ENCODE measurements at regions of chr7 and their contacts with region 1.

Region 1: GRCh38 chr7:26365077-26365900 is 73.6 kb downstream of the SNX10 start:
- DNase-seq: no peak
- ATAC-seq: peak; percentile 74

Region 2: GRCh38 chr7:25894902-25895791 is 470.1 kb before region 1 on chr7:
- intact Hi-C with region 1: loop called (anchors 2 kb)
- DNase-seq: peak; percentile 78
- ATAC-seq: peak; percentile 89

Region 3: DNA sequence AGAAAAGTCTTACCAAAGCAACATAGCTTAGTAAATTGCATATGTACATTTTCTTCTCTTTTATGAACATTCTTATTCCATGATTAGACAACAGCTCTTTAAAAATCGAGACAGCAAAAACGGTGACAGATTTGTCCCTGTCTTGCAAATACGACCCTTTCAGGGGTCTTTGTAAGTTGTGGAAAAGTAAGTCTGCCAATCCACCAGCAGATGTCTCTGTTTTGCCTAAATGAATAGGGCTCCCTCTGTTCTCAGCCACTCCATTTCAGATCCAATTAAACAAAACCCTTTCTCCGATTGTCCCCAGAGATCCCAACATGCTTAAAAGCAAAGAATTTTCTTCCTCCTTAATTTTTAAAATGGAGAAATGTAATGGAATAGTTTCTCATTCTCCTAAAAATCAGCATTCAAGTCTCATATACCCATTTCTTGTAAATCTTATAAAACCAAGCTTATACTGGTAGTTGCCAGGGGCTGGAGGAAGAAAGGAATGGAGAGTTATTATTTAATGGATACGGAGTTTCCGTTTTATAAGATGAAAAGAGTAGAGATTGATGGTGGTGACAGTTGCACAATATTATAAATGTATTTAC is 274.3 kb before region 1 on chr7:
- intact Hi-C with region 1: loop called (anchors 5 kb)
- DNase-seq: no peak
- ATAC-seq: peak; percentile 41

Region 4: GRCh38 chr7:26156454-26157365 is 208.6 kb before region 1 on chr7:
- intact Hi-C with region 1: no loop called
- DNase-seq: no peak
- ATAC-seq: no peak

Region 5: DNA sequence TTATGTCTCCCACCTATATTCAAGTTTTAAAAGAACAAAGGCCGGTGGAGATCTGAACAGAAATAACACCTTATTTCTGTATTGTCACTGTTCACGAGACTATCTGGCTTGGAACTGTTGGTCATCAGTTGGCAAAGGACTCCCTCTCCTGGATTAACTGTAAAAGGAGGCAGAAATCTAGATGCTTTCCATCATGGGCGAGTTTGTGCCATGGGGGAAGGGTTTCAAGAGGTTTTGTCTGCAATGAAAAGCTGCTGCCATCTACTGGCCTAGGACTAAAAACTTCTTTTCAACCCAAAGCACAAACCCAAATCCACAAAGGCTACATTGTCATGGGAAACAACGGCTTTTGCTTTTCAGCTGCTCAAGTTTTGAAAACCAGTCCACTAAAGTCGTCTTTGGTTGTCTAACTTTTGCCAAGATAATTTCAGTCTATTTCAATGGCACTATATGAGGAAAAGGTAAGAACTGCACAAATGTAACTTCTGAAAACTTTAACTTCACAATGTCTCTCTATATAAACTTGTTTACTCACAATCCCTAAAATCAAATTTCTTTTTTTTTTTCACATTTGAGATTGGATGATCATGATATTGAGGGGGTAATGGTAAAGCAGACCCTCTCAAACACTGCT is 302.3 kb after region 1 on chr7:
- intact Hi-C with region 1: loop called (anchors 2 kb)
- DNase-seq: no peak
- ATAC-seq: peak; percentile 49